Posterior vena cava (tissue), 2 donors: ENCODE measurements at regions of chr12 and their contacts with region 1.

Region 1: DNA sequence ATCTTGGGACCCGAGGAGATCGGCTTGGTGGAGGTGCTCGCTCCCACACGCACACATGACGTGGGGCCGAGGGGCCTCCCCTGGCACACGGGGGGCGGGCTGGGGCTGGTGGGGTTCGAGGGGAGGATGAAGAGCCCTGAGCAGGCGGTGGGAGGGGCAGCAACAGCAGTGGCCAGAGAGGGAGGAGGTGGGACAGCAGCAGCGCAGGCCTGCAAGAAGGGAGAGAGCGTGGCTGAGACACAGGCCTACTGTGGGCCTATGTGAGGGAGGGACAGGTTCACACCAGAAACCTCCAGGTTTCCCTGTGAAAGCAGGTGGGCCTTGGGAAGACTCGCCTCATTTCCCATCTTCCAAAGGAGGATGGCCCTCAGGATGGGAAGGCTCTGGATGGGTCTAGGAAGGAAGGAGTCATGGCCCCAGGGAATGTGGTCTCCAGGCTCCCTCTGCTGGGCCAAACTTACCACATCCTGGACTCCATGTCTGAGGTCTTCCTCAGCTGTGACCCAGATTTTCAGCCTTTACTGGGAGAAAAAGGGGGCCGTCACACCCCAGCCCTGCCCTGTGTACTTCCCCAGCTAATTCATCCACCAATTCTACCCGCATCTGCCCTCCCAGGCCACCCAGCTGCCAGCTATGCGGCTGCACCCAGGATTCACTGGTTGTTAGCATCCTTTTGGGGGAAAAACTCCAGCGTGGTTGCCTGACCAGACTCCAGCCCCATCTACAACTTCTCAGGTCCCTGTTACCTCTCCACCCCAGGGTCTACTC is 2.8 kb downstream of the PIANP start:
- DNase-seq: no peak

Region 2: DNA sequence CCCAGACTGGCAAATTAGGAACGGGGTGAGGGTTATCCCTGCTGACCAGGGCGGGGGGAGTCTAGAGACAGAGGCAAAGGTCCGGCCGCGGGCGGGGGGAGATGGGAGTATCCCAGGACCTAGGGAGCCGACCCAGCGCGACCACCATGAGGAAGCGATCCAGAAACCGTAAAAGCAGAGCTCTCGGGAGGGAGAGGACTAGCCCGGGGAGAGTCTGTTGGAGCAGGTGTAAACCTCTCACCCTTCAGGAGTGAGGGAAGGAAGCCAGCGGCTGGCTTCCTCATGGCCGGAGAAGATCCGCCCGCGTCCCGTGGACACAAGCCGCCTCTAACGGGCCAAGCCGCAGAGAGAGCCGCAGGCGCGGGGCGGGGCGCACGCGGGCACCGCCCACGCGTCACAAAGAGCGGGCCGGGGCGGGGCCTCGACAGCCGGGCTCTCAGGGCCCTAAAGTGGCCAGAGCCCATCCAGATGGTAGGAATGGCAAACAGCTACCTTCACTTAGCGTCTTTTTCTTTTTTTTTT is 50.6 kb before region 1 on chr12 and contains the start of gene ACRBP:
- intact Hi-C with region 1: loop called in 1 of 2 experiments (anchors 1 kb)
- DNase-seq: peak; percentile 94
- total RNA-seq, gene ACRBP: 1.3 to 2.2 TPM

Region 3: GRCh38 chr12:6735448-6736191 is 37.9 kb after region 1 on chr12:
- intact Hi-C with region 1: no loop called
- DNase-seq: peak; percentile 84